ENCODE measurements at regions of chr22 and their contacts with region 1.

Region 1: GRCh38 chr22:38872172-38872830 is at the start of gene CBX6:
- DNase-seq: peak; percentile 97
- ATAC-seq: peak; percentile 55
- H3K4me3 Mint-ChIP-seq: peak within 1 kb of the TSS; percentile 93
- H3K27ac Mint-ChIP-seq: peak within 1 kb of the TSS; percentile 94
- H3K4me1 Mint-ChIP-seq: peaks cover 58% of the 10 kb centered on the region
- H3K27me3 Mint-ChIP-seq: no peaks in the 10 kb centered on the region
- total RNA-seq, gene CBX6: 96.1 to 112 TPM

Region 2: GRCh38 chr22:38455530-38456271 is 416.6 kb before region 1 on chr22:
- CTCF ChIA-PET with region 1: no interaction called
- POLR2A ChIA-PET with region 1: no interaction called
- intact Hi-C with region 1: no loop called
- DNase-seq: peak; percentile 51
- ATAC-seq: peak; percentile 31
- H3K4me3 Mint-ChIP-seq: no peak overlapping the region
- H3K27ac Mint-ChIP-seq: no peak overlapping the region
- H3K4me1 Mint-ChIP-seq: peaks cover 11% of the 10 kb centered on the region
- H3K27me3 Mint-ChIP-seq: peaks cover 56% of the 10 kb centered on the region

Region 3: GRCh38 chr22:38755911-38756532 is 116.3 kb before region 1 on chr22 and contains the start of gene SUN2:
- CTCF ChIA-PET with region 1: interaction called, 5 read pairs
- POLR2A ChIA-PET with region 1: no interaction called
- intact Hi-C with region 1: loop called in 1 of 2 experiments (anchors 1 kb)
- DNase-seq: peak; percentile 96
- ATAC-seq: peak; percentile 74
- H3K4me3 Mint-ChIP-seq: peak within 1 kb of the TSS; percentile 92
- H3K27ac Mint-ChIP-seq: peak within 1 kb of the TSS; percentile 94
- H3K4me1 Mint-ChIP-seq: peaks cover 58% of the 10 kb centered on the region
- H3K27me3 Mint-ChIP-seq: no peaks in the 10 kb centered on the region
- total RNA-seq, gene SUN2: 87.2 to 102 TPM

Region 4: GRCh38 chr22:38853196-38853651 is 19.1 kb before region 1 on chr22:
- CTCF ChIA-PET with region 1: interaction called, 26 read pairs
- POLR2A ChIA-PET with region 1: no interaction called
- intact Hi-C with region 1: no loop called
- DNase-seq: no peak
- ATAC-seq: no peak
- H3K4me3 Mint-ChIP-seq: no peak overlapping the region
- H3K27ac Mint-ChIP-seq: no peak overlapping the region
- H3K4me1 Mint-ChIP-seq: no peaks in the 10 kb centered on the region
- H3K27me3 Mint-ChIP-seq: peaks cover 4% of the 10 kb centered on the region

Region 5: DNA sequence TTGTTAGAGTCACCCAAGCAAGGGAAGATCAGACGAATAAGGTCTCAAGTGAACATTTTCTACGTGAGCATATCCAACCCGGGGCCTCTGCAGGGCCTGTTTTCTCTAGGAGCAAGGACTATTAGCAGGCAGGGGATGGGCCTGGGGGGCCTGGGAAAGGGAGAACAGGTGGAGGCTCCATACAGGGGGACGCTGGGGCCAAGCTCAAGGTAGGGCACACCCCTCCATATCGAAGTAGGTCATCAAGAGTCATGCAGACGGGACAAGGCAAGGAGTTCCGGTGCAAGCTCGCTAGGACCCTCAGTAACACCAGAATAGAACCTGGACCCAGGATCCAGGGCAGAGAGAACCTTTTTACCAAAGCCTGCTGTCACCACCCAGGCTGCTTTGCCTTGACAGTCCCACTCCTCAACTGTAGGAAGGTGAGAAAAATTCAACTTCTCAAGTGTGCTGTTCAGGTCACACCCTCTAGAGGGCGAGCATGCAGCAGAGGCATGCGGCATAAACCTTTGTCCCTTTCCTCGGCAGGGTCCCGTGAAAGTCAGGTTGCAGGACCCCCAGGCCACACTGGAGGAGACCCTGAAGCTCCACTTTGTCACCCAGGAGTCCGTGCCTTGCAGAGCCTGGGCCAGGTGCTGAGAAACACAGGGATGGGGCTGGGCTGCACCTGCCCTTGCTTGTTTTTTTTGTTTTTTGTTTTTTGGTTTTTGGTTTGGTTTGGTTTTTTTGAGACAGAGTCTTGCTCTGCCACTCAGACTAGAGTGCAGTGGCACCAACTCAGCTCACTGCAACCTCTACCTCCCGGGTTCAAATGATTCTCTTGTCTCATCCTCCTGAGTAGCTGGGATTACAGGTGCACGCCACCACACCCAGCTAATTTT is 101.2 kb after region 1 on chr22:
- CTCF ChIA-PET with region 1: interaction called, 4 read pairs
- POLR2A ChIA-PET with region 1: no interaction called
- intact Hi-C with region 1: loop called in 1 of 2 experiments (anchors 1 kb)
- DNase-seq: peak; percentile 75
- ATAC-seq: peak; percentile 94
- H3K4me3 Mint-ChIP-seq: no peak overlapping the region
- H3K27ac Mint-ChIP-seq: no peak overlapping the region
- H3K4me1 Mint-ChIP-seq: peaks cover 3% of the 10 kb centered on the region
- H3K27me3 Mint-ChIP-seq: peaks cover 10% of the 10 kb centered on the region

Region 6: GRCh38 chr22:39021552-39022250 is 149.4 kb after region 1 on chr22:
- CTCF ChIA-PET with region 1: interaction called, 3 read pairs
- POLR2A ChIA-PET with region 1: no interaction called
- intact Hi-C with region 1: loop called in 1 of 2 experiments (anchors 1 kb)
- DNase-seq: no peak
- ATAC-seq: no peak
- H3K4me3 Mint-ChIP-seq: peak overlapping the region; percentile 95
- H3K27ac Mint-ChIP-seq: peak overlapping the region; percentile 95
- H3K4me1 Mint-ChIP-seq: peaks cover 53% of the 10 kb centered on the region
- H3K27me3 Mint-ChIP-seq: no peaks in the 10 kb centered on the region

Region 7: DNA sequence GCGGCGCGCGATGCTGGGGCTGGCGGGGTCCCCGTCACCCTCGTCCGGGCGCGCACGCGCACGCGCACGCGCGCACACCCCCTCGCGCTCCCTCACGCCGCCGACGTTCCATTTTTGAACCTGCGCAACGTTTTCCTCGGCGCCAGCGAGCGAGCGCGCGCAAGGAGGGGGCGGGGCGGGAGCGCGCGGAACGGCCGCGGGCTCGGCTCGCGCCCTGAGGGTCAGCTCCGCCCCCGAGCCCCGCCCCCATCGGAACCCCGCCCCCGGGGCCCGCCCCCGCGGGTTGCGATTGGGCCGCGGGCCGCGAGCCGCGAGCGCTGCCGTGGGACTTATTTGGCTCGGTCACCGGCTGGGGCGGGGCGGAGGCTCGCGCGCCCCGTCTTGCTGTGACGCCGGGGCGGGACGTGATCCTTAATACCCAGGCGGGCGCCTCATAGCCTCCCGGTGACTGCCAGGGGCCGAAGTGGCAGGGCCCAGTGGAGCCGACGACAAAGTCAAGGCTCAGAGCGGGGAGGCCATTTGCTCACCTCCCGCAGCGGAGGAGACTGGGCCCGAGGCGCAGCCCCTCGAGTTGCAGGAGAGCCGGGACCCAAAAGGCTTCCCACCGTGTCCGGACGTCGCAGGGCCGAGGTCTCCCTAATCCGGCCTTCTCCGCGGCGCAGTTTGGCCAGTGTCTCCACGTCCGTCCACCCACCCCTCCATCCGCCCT is 280.4 kb after region 1 on chr22 and contains the start of gene CBX7:
- CTCF ChIA-PET with region 1: interaction called, 6 read pairs
- POLR2A ChIA-PET with region 1: interaction called, 3 read pairs
- intact Hi-C with region 1: loop called (anchors 1 to 2 kb)
- DNase-seq: peak; percentile 95
- ATAC-seq: peak; percentile 83
- H3K4me3 Mint-ChIP-seq: peak within 1 kb of the TSS; percentile 76
- H3K27ac Mint-ChIP-seq: peak within 1 kb of the TSS; percentile 72
- H3K4me1 Mint-ChIP-seq: peaks cover 40% of the 10 kb centered on the region
- H3K27me3 Mint-ChIP-seq: peaks cover 13% of the 10 kb centered on the region
- total RNA-seq, gene CBX7: 19.9 to 20.3 TPM

Region 8: GRCh38 chr22:40782518-40782917 is 1910.2 kb after region 1 on chr22:
- CTCF ChIA-PET with region 1: no interaction called
- POLR2A ChIA-PET with region 1: no interaction called
- intact Hi-C with region 1: no loop called
- DNase-seq: no peak
- ATAC-seq: no peak
- H3K4me3 Mint-ChIP-seq: no peak overlapping the region
- H3K27ac Mint-ChIP-seq: no peak overlapping the region
- H3K4me1 Mint-ChIP-seq: no peaks in the 10 kb centered on the region
- H3K27me3 Mint-ChIP-seq: no peaks in the 10 kb centered on the region